PC-3 (cell line): ENCODE measurements at regions of chr12 and their contacts with region 1.

Region 1: GRCh38 chr12:104371043-104371870 is 67.7 kb downstream of the EID3 start:
- DNase-seq: peak; percentile 99
- ATAC-seq: peak; percentile 87
- H3K4me3 ChIP-seq: peak overlapping the region; percentile 39
- H3K27ac ChIP-seq: peak overlapping the region; percentile 83
- H3K4me1 ChIP-seq: peaks cover 55% of the 10 kb centered on the region
- H3K27me3 ChIP-seq: no peaks in the 10 kb centered on the region
- CTCF ChIP-seq: no peak

Region 2: GRCh38 chr12:104201238-104202001 is 169.8 kb before region 1 on chr12:
- CTCF ChIA-PET with region 1: no interaction called
- POLR2A ChIA-PET with region 1: no interaction called
- intact Hi-C with region 1: loop called (anchors 5 kb)
- DNase-seq: peak; percentile 84
- ATAC-seq: peak; percentile 93
- H3K4me3 ChIP-seq: no peak overlapping the region
- H3K27ac ChIP-seq: 0 out of 2 replicates have a peak overlapping the region, but pooled peaks have one; percentile 0
- H3K4me1 ChIP-seq: peaks cover 6% of the 10 kb centered on the region; the same call in 1 of the 2 replicates
- H3K27me3 ChIP-seq: no peaks in the 10 kb centered on the region
- CTCF ChIP-seq: peak; percentile 98

Region 3: DNA sequence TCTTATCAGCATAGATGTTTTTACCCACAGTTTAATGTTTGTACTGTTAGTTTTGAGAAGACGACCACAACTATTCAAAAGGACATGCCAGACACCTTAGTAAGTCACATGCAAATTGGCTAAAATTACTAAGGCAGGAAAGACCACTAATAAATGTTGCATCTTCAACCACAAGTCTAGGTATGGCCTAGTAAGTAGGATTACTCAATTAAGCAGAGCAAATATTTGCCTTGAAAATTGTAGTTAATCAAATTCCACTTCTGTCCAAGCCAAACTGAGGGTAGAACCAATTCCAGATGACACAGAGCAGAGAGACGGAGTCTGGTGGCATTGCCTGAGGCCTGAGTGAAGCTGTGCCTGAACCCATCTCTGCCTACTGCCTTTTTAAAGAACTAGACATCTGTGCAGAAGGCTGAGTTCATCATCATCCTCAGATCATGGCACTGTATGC is 55.8 kb after region 1 on chr12:
- CTCF ChIA-PET with region 1: no interaction called
- POLR2A ChIA-PET with region 1: no interaction called
- intact Hi-C with region 1: no loop called
- DNase-seq: peak; percentile 89
- ATAC-seq: peak; percentile 88
- H3K4me3 ChIP-seq: no peak overlapping the region
- H3K27ac ChIP-seq: no peak overlapping the region
- H3K4me1 ChIP-seq: peaks cover 33% of the 10 kb centered on the region
- H3K27me3 ChIP-seq: no peaks in the 10 kb centered on the region
- CTCF ChIP-seq: no peak

Region 4: GRCh38 chr12:104671407-104672098 is 300.3 kb after region 1 on chr12:
- CTCF ChIA-PET with region 1: no interaction called
- POLR2A ChIA-PET with region 1: no interaction called
- intact Hi-C with region 1: loop called (anchors 5 kb)
- DNase-seq: peak; percentile 100
- ATAC-seq: peak; percentile 80
- H3K4me3 ChIP-seq: peak overlapping the region; percentile 49; the same call in 1 of the 2 replicates
- H3K27ac ChIP-seq: peak overlapping the region; percentile 77
- H3K4me1 ChIP-seq: peaks cover 48% of the 10 kb centered on the region
- H3K27me3 ChIP-seq: no peaks in the 10 kb centered on the region
- CTCF ChIP-seq: no peak

Region 5: DNA sequence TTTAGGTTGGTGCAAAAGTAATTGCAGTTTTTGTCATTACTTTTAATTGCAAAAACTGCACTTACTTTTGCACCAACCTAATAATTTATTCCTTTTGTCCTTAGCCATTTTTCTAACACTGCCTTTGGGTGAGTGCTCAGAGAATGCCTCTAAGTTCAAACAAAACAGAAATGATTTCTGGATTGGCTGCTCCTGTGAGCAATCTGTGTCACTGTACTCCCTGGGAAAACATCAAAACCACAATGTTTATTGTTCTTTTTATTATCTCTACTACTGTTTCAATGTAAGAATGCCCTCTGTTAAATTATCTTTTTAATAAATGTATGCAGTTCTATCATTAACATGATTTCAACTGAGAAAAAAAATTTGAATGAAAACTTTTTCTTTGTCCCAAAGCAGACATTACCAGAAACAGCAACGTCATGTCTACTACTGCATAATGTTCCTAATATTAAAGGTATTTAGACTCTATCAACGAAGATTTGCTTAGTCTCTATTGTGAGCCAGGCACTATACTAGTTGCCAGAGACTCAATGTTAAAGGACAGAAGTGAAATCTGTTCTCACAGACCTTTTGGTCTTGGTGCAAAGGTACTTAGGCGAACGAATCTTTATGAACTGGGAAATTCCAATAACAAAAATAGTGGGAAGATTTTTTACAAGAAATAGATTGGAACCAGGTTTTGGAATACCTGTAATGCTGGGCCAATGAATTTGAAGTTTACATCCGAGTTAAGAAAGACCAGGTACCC is 580.7 kb after region 1 on chr12:
- CTCF ChIA-PET with region 1: no interaction called
- POLR2A ChIA-PET with region 1: no interaction called
- intact Hi-C with region 1: loop called (anchors 1 kb)
- DNase-seq: peak; percentile 80
- ATAC-seq: peak; percentile 95
- H3K4me3 ChIP-seq: no peak overlapping the region
- H3K27ac ChIP-seq: no peak overlapping the region
- H3K4me1 ChIP-seq: peaks cover 33% of the 10 kb centered on the region
- H3K27me3 ChIP-seq: no peaks in the 10 kb centered on the region
- CTCF ChIP-seq: no peak

Region 6: DNA sequence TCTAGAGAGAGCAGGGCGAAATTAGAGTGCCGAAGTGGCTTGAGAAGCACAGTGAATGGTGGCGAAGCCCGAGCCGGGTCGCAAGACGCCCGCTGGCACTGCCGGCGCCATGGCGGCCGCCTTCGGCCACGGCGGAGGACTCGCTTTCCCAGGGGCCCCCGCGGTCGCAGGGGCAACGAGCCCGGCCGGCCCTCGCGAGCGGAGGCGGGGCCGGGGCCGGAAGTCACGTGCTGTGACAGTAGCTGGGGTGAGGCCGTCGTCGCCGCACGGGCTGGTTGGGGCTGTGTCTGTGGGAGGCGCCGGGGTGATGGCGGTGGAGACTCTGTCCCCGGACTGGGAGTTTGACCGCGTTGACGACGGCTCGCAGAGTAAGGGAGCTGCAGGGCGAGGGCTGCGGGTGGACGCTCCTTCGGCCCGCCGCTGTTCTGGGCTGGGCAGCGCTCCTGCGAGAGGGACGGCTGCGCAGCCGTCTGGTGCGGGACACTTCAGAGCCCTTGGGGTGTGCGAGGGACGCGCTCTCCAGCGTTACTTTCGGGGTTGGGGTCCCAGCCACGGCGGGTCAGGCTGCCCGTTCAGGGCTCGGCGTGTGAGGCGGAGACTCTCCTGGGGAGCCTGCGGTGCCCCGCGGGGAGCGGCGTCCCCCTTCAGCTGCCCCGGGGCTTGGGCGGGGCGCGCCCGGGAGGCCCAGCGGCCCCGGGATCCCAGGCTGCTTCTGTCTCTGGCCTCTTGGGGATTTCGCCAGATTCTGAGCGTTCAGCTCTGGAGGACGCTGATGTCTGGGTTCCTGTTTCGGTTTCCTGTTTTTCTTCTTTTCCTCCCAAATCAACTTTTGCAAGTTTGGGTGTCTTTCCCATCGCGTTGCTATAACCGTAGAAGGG is 736.5 kb after region 1 on chr12 and contains the start of gene WASHC4:
- CTCF ChIA-PET with region 1: no interaction called
- POLR2A ChIA-PET with region 1: no interaction called
- intact Hi-C with region 1: loop called (anchors 10 kb)
- DNase-seq: peak; percentile 97
- ATAC-seq: peak; percentile 92
- H3K4me3 ChIP-seq: peak within 1 kb of the TSS; percentile 72
- H3K27ac ChIP-seq: peak within 1 kb of the TSS; percentile 76
- H3K4me1 ChIP-seq: peaks cover 24% of the 10 kb centered on the region; the same call in 1 of the 2 replicates
- H3K27me3 ChIP-seq: no peaks in the 10 kb centered on the region
- CTCF ChIP-seq: no peak
- total RNA-seq, gene WASHC4: 38.2 and 46.9 TPM in 2 replicates